H1 (cell line): ENCODE measurements at regions of chr12 and their contacts with region 1.

Region 1: GRCh38 chr12:49673446-49674317 is 33.5 kb downstream of the FMNL3 start:
- DNase-seq: peak in 1 of 2 experiments; percentile 61
- H3K4me3 ChIP-seq: no peak overlapping the region
- H3K27ac ChIP-seq: 0 out of 2 replicates have a peak overlapping the region, but pooled peaks have one; percentile 6
- H3K4me1 ChIP-seq: peaks cover 3 to 7% (median 6%) of the 10 kb centered on the region in 4 experiments
- H3K27me3 ChIP-seq: no peaks in the 10 kb centered on the region
- CTCF ChIP-seq: peak in 1 of 3 experiments; percentile 9; a peak in 1 of 4 replicates
- EP300 ChIP-seq: no peak
- POLR2A ChIP-seq: no peak
- RAD21 ChIP-seq: 0 out of 4 replicates have a peak, but pooled peaks of 1 of the 2 experiments have one; percentile 6

Region 2: DNA sequence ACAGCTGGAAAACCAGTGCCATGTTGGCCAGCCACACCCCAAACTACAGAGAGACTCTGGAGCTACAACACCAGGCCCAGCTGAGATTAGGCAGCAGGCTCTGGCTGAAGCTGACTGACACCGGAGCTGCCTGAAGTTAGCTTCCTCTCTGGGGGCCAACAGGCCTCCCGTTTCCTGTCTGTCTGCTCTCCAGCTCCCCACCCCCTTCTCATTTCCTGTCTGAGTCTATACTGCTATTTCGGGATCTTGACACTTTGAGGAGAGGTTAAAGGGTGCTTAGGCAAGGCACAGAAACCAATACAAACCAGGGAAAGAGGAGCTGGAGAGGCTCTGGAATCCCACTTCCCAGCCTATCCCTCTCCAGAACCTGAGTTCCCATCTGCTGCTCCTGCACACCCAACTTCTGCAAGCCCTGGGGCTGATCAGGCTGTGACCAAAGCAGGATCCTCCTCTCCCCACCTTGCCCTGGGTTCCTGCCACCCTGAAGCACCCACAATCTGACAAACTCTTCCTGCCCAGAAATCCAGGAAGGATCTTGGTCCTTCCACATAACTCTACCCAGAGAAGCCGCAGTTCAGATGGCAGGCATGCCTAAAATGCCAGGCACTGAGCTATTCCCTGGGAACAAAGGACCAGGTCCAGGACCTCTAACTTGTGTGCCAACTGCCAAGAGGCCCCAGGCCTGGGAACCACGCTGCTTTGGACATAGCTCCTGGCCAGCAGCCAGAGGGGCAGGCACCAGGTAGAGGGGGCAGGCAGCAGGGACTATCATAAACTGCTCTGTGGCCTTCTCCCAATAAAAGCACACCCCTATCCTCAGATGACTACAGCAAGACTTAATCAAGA is 10.5 kb before region 1 on chr12:
- CTCF ChIA-PET with region 1: interaction called, 30 read pairs
- POLR2A ChIA-PET with region 1: interaction called, 36 read pairs
- DNase-seq: peak in 1 of 2 experiments; percentile 21
- H3K4me3 ChIP-seq: no peak overlapping the region
- H3K27ac ChIP-seq: no peak overlapping the region
- H3K4me1 ChIP-seq: peaks cover 3 to 6% (median 4%) of the 10 kb centered on the region in 4 experiments; a peak in 4 of 7 replicates
- H3K27me3 ChIP-seq: no peaks in the 10 kb centered on the region
- CTCF ChIP-seq: no peak
- EP300 ChIP-seq: no peak
- POLR2A ChIP-seq: no peak
- RAD21 ChIP-seq: no peak

Region 3: DNA sequence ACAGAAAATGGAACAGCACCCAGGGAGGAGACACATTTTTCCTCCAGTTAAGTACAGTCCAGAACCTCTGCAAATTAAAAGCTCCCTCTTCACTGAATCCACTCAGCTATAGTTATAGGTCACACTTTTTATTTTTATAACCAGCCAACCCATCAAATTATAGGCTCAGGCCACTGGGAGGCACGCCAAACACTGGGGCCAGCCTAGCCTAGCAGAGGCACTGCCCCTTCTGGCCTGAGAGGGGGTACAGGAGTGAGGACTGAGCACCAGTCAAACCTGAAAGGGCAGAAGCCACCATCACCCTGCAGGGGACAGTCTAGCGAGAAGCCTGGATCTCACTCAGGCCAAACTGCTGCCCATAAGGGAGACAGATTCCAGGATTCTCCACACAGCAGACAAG is 14.3 kb after region 1 on chr12:
- CTCF ChIA-PET with region 1: interaction called, 35 read pairs
- POLR2A ChIA-PET with region 1: interaction called, 35 read pairs
- DNase-seq: no peak
- H3K4me3 ChIP-seq: no peak overlapping the region
- H3K27ac ChIP-seq: no peak overlapping the region
- H3K4me1 ChIP-seq: peaks cover 0 to 7% (median 4%) of the 10 kb centered on the region in 4 experiments; a peak in 4 of 7 replicates
- H3K27me3 ChIP-seq: no peaks in the 10 kb centered on the region
- CTCF ChIP-seq: peak; percentile 68 to 78 (median 70)
- EP300 ChIP-seq: no peak
- POLR2A ChIP-seq: no peak
- RAD21 ChIP-seq: peak; percentile 32 to 52; a peak in 3 of 4 replicates

Region 4: GRCh38 chr12:49698619-49699545 is 25.2 kb after region 1 on chr12:
- CTCF ChIA-PET with region 1: interaction called, 38 read pairs
- POLR2A ChIA-PET with region 1: interaction called, 35 read pairs
- DNase-seq: peak; percentile 57 to 67
- H3K4me3 ChIP-seq: peak overlapping the region in 3 of 4 experiments; percentile 16 to 49 (median 32); a peak in 4 of 8 replicates
- H3K27ac ChIP-seq: peak overlapping the region; percentile 64; the same call in 1 of the 2 replicates
- H3K4me1 ChIP-seq: peaks cover 7 to 45% (median 22%) of the 10 kb centered on the region in 4 experiments
- H3K27me3 ChIP-seq: no peaks in the 10 kb centered on the region
- CTCF ChIP-seq: no peak
- EP300 ChIP-seq: no peak
- POLR2A ChIP-seq: peak in 1 of 2 experiments; percentile 63; a peak in 1 of 3 replicates
- RAD21 ChIP-seq: no peak

Region 5: GRCh38 chr12:49707128-49707811 is 33.6 kb after region 1 on chr12 and contains the start of gene FMNL3:
- CTCF ChIA-PET with region 1: interaction called, 38 read pairs
- POLR2A ChIA-PET with region 1: interaction called, 18 read pairs
- DNase-seq: peak; percentile 77 to 99
- H3K4me3 ChIP-seq: peak within 1 kb of the TSS; percentile 53 to 82 (median 75)
- H3K27ac ChIP-seq: no peak within 1 kb of the TSS
- H3K4me1 ChIP-seq: peaks cover 3 to 27% (median 8%) of the 10 kb centered on the region in 4 experiments
- H3K27me3 ChIP-seq: peaks cover 1 to 9% (median 6%) of the 10 kb centered on the region in 4 experiments
- CTCF ChIP-seq: peak; percentile 87 to 96 (median 88)
- EP300 ChIP-seq: no peak
- POLR2A ChIP-seq: peak in 1 of 2 experiments; percentile 45; a peak in 2 of 3 replicates
- RAD21 ChIP-seq: peak; percentile 92 to 98
- total RNA-seq, gene FMNL3: 27.6 and 29.0 TPM in 2 replicates